Activated B cell treated with CpG ODN at 0.5 μM for 24 hours (primary cell): ENCODE measurements at regions of chr16 and their contacts with region 1.

Region 1: DNA sequence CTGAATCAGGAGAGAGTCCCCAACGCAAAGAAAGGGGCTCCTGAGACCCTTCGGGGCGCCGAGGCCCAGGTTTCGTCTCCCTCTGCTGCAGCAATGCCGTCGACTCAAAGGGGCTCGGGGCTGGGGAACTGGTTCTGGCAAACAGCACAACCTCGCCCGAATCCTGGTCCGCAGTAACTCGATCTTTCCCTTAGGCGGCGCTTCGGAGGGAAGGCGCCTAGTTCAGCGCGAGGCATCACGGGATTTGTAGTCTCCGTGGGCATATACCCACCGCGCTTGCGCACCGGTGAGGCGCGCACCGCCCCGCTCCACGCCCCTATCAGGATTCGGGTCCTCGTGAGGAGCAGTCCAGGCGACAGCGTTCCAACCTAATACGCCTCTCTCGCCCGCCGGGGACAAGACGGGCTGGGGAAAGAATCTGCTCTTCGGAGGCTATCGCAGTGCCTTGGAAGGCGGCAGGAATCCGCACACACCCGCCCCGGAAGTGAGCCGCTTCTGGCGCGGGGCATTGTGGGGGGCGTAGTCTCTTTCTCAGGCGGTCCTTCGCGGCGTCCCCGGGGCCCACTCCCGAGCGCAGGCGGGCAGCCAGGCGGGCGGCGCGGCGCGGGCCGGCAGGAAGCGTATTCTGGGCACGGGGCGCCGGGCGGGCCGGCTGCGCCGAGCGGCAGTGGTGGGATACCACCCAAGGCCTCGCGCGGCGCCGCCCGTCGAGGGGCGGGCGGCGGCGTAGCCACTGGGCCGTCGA is at the start of gene THAP11:
- DNase-seq: peak; percentile 95
- ATAC-seq: peak; percentile 54
- H3K4me3 Mint-ChIP-seq: peak within 1 kb of the TSS; percentile 95
- H3K27ac Mint-ChIP-seq: peak within 1 kb of the TSS; percentile 95
- H3K4me1 Mint-ChIP-seq: peaks cover 43% of the 10 kb centered on the region
- H3K27me3 Mint-ChIP-seq: no peaks in the 10 kb centered on the region
- CTCF ChIP-seq: peak; percentile 38
- total RNA-seq, gene THAP11: 24.2 and 24.9 TPM in 2 replicates

Region 2: DNA sequence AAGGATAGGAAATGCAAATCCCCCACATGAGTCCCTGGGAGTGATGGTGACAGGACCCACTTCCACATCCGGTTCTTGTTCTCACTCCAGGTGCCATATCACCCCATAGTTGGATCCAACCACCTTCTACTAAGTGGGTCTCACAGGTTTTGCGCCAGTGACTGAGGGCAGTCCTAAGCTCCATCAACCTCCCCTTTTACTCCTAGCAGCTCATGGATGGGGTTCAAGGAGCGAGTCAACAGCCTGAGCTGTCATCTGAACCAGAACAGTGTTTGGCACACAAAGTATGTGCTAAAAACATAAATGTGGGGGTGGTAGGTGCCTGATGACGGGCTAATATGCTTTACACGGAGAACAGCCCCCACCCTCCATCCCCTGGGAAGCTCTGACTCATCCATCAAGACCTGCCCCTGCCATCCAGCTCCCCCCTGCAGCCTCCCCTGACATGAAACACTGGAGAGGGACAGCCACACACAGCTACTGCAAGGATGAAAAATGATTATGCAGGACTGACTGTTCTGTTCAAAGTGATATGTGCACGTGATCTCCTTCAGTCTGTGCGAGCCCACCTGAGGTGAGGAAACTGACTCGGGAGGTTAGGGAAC is 1618.7 kb before region 1 on chr16:
- CTCF ChIA-PET with region 1: no interaction called
- POLR2A ChIA-PET with region 1: no interaction called
- intact Hi-C with region 1: no loop called
- DNase-seq: no peak
- ATAC-seq: no peak
- H3K4me3 Mint-ChIP-seq: no peak overlapping the region
- H3K27ac Mint-ChIP-seq: no peak overlapping the region
- H3K4me1 Mint-ChIP-seq: no peaks in the 10 kb centered on the region
- H3K27me3 Mint-ChIP-seq: peaks cover 13% of the 10 kb centered on the region
- CTCF ChIP-seq: no peak

Region 3: DNA sequence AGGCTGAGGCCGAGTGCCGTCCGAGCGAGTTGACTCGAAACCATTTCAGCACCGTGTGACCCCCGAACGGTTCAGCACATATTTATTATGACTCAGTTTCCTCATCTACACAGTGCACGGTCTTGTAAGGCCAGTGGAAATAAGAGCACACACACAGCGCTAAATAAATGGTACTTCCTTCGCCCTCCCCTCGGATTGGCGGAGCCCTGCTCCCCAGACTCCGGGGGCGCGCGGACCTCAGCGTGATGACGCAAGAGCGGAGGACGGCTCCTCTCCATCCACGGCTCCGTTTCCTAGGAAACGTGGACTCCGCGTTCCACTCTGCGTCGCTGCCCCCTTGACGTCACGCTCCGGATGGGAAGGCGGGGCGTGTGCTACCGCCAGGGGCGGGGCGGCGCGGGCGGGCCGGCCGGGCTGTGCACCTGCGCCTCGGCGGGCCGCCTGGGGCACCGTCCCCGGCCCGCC is 181.3 kb before region 1 on chr16 and contains the start of gene PARD6A:
- CTCF ChIA-PET with region 1: no interaction called
- POLR2A ChIA-PET with region 1: no interaction called
- intact Hi-C with region 1: loop called (anchors 2 kb)
- DNase-seq: peak; percentile 87
- ATAC-seq: peak; percentile 80
- H3K4me3 Mint-ChIP-seq: peak within 1 kb of the TSS; percentile 94
- H3K27ac Mint-ChIP-seq: peak within 1 kb of the TSS; percentile 94
- H3K4me1 Mint-ChIP-seq: peaks cover 28% of the 10 kb centered on the region
- H3K27me3 Mint-ChIP-seq: no peaks in the 10 kb centered on the region
- CTCF ChIP-seq: no peak
- total RNA-seq, gene PARD6A: 5.9 and 6.0 TPM in 2 replicates

Region 4: DNA sequence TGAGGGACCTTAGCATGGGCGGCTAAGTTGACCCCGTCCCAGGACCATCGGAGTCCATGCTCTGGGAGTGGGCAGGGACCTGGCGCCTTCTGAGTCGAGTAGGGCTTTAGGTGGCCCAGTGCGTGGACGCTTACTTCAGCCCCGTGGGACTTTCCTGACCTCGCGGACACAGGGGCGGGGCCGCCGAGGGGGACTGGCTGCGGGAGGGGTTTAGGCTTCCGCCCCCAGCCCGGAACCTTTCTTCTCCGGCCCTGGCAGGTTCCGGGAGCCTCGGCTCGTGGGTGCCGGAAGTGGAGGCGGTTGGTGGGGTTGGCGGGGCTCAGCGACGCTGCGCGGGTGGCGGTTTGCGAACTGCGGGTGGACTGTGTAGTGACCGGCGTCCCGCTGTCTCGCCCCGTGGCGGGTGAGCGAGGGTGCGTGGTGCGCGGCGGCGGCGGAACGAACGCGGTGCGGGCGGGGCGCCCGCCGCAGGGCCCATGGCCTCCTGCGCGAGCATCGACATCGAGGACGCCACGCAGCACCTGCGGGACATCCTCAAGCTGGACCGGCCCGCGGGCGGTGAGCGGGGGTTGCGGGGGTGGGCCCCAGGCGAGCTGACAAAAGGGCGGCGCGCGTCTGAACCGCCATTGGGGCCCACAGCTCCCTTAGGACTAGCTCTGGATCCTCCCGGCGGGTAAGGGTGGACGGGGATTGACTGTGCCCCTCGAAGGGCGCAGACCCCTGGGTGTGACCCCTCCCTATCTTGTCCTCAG is 31.0 kb after region 1 on chr16 and contains the start of gene EDC4:
- CTCF ChIA-PET with region 1: no interaction called
- POLR2A ChIA-PET with region 1: interaction called, 4 read pairs
- intact Hi-C with region 1: loop called (anchors 1 kb)
- DNase-seq: peak; percentile 89
- ATAC-seq: peak; percentile 93
- H3K4me3 Mint-ChIP-seq: peak within 1 kb of the TSS; percentile 90
- H3K27ac Mint-ChIP-seq: peak within 1 kb of the TSS; percentile 84
- H3K4me1 Mint-ChIP-seq: peaks cover 36% of the 10 kb centered on the region
- H3K27me3 Mint-ChIP-seq: no peaks in the 10 kb centered on the region
- CTCF ChIP-seq: no peak
- total RNA-seq, gene EDC4: 71.5 TPM in 2 replicates

Region 5: DNA sequence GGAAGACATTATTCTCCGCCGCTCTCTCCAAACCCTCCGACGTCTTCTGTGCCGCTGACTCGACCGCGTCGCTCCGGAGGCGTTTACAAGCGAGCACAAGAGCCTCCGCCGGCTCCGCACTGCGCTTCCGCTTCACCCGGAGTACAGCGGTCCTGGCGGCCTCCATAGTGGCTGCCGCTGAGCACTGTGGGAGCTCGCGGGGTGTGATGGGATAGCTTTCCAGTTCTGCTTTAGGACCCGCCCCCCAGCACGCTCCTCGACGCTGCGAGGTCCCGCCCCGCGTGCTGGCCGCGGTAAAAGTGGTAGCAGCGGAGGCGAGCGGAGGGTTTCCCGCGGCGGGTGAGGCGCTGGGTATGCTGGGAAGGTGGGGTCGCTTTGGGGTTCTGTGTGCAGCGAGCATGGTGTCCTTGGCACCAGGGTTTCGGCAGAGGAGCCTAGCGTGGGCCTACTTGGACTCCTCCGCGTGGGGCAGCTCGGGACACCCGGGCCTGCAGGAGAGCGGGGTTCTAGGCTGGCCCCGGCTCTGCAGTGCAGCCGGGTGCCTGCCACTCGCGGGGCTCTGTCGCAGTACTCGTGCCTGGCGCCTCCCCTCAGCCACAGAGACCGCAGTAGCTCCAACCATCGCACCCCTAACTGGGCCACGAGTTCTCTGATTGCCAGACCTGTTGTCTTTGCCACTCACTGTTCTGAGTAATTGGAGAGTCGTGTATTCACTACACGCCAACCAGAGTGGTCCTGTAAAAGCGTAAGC is 469.0 kb after region 1 on chr16 and contains the starts of genes PRMT7 and SLC7A6OS:
- CTCF ChIA-PET with region 1: no interaction called
- POLR2A ChIA-PET with region 1: no interaction called
- intact Hi-C with region 1: loop called (anchors 2 kb)
- DNase-seq: peak; percentile 87
- ATAC-seq: peak; percentile 99
- H3K4me3 Mint-ChIP-seq: peak within 1 kb of the TSS; percentile 98
- H3K27ac Mint-ChIP-seq: peak within 1 kb of the TSS; percentile 93
- H3K4me1 Mint-ChIP-seq: peaks cover 38% of the 10 kb centered on the region
- H3K27me3 Mint-ChIP-seq: no peaks in the 10 kb centered on the region
- CTCF ChIP-seq: no peak
- total RNA-seq, gene PRMT7: 41.8 and 50.3 TPM in 2 replicates
- total RNA-seq, gene SLC7A6OS: 34.8 and 42.0 TPM in 2 replicates